H1 (cell line): ENCODE measurements at regions of chr4 and their contacts with region 1.

Region 1: DNA sequence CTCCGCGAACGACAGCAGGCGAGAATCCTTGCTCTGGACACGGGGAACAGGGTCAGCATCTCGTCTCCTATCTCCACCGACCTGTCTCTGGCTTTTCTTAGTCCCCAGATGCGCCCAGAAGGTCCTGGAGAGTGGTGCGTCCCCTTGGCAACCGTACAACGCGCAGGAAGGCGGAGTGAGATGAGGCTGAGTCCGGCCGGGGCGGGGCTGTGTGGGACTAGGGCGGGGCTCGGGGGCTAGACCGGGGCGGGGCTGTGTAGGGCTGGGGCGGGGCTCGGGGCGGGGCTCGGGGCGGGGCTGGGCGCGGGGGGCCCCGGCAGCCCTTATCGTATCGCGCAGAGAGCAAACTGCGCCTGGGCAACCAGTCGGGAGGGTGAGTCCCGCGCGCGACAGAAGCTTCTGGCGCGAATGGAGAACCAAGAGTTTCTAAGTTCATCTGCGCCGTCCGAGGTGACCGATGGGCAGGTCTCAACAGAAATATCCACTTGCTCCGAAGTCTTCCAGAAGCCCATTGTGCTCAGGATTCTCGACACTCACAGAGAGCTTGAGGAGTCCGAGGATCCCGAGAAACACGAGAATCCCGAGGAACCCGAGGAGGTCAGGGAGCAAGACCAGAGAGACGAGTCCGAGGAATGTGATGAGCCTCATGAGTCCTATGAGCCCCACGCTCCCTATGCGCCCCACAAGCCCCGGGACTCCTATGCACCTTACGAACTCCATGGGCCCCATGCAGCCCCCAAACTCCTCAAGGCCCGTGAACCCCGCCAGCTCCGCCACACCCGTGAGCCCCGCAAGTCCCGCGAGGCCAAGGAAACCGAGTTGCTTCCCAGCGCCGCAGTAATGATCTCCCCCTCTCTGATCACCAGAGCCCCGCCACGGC is 24.9 kb downstream of the ARL9 start:
- DNase-seq: peak in 1 of 2 experiments; percentile 89
- H3K4me3 ChIP-seq: peak overlapping the region; percentile 60 to 92 (median 76)
- H3K27ac ChIP-seq: no peak overlapping the region
- H3K4me1 ChIP-seq: no peaks in the 10 kb centered on the region; a peak in 1 of 7 replicates
- H3K27me3 ChIP-seq: peaks cover 18 to 33% (median 25%) of the 10 kb centered on the region in 4 experiments
- CTCF ChIP-seq: no peak
- EP300 ChIP-seq: no peak
- POLR2A ChIP-seq: peak; percentile 19 to 60; a peak in 2 of 3 replicates
- RAD21 ChIP-seq: no peak

Region 2: GRCh38 chr4:56544573-56545131 is 14.1 kb after region 1 on chr4:
- CTCF ChIA-PET with region 1: interaction called, 17 read pairs
- POLR2A ChIA-PET with region 1: interaction called, 3 read pairs
- DNase-seq: peak in 1 of 2 experiments; percentile 99
- H3K4me3 ChIP-seq: peak overlapping the region; percentile 24 to 59 (median 50); a peak in 7 of 8 replicates
- H3K27ac ChIP-seq: no peak overlapping the region
- H3K4me1 ChIP-seq: no peaks in the 10 kb centered on the region; a peak in 1 of 7 replicates
- H3K27me3 ChIP-seq: peaks cover 0 to 6% (median 2%) of the 10 kb centered on the region in 4 experiments; a peak in 4 of 7 replicates
- CTCF ChIP-seq: peak; percentile 95 to 99 (median 95)
- EP300 ChIP-seq: no peak
- POLR2A ChIP-seq: no peak
- RAD21 ChIP-seq: peak; percentile 84 to 92